PC-3 (cell line): ENCODE measurements at regions of chr2 and their contacts with region 1.

Region 1: DNA sequence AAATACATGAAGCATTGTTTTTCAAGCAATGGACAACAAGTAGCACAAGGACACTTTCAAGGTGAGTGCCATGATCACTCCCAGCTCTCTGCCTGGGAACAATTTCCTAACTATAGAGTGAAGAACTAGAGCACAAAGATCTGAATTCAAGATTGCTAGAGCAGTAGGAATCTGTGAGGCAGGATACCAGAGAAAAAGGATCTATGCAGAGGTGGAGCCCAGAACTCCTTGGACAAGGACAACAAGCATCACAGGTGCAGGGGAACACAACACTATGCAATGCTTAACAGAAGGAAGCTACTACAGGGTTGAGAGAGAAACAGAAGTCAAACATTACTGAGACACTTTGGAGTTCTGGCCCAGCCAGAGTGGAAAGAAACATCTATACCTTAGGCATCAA is 24.7 kb downstream of the ATL2 start:
- DNase-seq: no peak
- ATAC-seq: no peak
- H3K4me3 ChIP-seq: no peak overlapping the region
- H3K27ac ChIP-seq: no peak overlapping the region
- H3K4me1 ChIP-seq: no peaks in the 10 kb centered on the region
- H3K27me3 ChIP-seq: no peaks in the 10 kb centered on the region
- CTCF ChIP-seq: no peak

Region 2: DNA sequence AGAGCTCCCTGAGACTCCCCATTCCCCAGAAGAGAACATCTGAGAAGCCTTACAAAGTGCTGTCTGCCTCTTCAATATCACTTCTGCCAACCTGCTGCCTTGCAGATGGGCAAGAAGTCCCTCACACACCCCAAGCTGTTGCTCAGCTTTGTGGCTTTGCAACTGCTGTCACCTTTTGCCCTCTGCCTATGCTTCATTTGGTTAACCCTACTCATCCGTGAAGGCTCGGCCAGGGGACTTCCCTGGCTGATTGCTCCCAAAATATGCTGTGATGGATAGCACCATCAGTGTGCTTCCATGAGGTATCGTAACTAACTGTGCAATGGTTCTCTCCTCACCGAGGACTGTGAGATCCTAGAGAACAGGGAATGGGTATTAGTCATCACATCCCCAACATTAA is 187.5 kb before region 1 on chr2:
- CTCF ChIA-PET with region 1: no interaction called
- POLR2A ChIA-PET with region 1: no interaction called
- intact Hi-C with region 1: no loop called
- DNase-seq: no peak
- ATAC-seq: no peak
- H3K4me3 ChIP-seq: no peak overlapping the region
- H3K27ac ChIP-seq: no peak overlapping the region
- H3K4me1 ChIP-seq: no peaks in the 10 kb centered on the region
- H3K27me3 ChIP-seq: no peaks in the 10 kb centered on the region
- CTCF ChIP-seq: no peak

Region 3: DNA sequence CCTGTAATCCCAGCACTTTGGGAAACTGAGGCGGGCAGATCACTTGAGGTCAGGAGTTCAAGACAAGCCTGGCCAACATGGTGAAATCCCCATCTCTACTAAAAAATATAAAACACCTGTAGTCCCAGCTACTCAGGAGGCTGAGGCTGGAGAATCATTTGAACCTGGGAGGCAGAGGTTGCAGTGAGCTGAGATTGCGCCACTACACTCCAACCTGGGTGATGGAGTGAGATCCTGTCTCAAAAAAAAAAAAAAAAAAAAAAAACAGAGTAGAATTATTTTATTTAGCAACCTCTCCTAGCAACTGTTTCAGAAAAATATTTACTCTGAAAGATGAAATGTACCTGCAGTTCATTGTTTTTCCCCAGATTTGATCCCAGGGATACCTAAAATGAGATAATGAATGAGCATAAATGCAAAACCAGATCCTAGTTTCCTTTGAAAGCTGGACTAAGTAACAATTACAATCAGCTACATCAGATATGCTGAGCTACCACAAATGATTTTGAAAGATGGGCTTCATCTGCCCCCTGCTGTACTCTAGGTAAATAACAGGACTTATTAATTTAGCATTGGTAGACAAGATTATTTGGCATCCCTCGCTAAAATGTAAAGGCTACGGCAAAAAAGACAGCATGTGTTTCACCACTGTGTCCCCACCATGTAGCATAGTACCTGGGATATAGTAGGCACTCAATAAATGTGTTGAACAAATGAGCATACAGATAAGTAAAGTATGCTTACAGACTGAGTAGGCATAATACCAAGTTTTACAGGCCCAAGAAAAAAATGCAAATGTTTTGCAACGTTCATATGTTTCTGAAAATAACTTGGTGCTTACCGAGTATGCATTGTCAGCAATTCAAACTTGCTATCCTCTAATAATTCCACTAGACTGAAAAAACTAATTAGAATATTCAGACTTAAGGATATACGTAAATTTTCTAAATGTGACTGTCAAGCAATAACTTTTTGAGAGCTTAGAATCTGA is 77.8 kb before region 1 on chr2:
- CTCF ChIA-PET with region 1: no interaction called
- POLR2A ChIA-PET with region 1: no interaction called
- intact Hi-C with region 1: no loop called
- DNase-seq: peak; percentile 83
- ATAC-seq: peak; percentile 67
- H3K4me3 ChIP-seq: no peak overlapping the region
- H3K27ac ChIP-seq: no peak overlapping the region
- H3K4me1 ChIP-seq: no peaks in the 10 kb centered on the region
- H3K27me3 ChIP-seq: no peaks in the 10 kb centered on the region
- CTCF ChIP-seq: peak; percentile 80

Region 4: DNA sequence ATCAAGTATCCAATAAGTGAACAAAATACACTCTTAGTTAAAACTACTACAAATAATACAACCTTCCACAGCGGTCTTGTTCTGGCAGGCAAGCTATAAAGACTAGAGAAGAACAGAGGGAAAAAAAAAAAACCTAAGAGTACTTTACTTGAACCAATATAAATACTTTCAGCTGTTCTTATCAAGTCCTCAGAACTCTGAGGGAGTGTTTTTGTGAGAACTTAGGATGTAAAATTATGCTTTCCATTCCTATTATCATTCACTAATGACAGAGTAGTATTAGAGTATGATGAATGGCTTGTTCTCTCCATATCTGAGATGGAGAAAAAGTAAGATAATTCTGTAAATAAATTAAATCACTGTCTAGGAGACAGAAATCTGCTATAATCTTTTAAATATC is 43.5 kb before region 1 on chr2:
- CTCF ChIA-PET with region 1: no interaction called
- POLR2A ChIA-PET with region 1: no interaction called
- intact Hi-C with region 1: no loop called
- DNase-seq: no peak
- ATAC-seq: no peak
- H3K4me3 ChIP-seq: no peak overlapping the region
- H3K27ac ChIP-seq: no peak overlapping the region
- H3K4me1 ChIP-seq: no peaks in the 10 kb centered on the region
- H3K27me3 ChIP-seq: no peaks in the 10 kb centered on the region
- CTCF ChIP-seq: no peak

Region 5: DNA sequence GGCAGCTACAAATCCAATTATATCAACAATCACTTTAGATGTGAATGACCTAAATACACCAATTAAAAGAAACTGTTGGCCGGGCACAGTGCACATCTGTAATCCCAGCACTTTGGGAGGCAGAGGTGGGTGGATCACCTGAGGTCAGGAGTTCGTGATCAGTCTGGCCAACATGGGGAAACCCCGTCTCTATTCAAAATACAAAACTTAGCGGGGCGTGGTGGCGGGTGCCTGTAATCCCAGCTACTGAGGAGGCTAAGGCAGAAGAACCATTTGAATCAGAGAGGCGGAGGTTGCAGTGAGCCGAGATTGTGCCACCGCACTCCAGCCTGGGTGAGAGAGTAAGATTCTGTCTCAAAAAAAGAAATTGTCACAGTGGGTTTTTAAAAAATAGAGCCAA is 24.8 kb before region 1 on chr2:
- CTCF ChIA-PET with region 1: no interaction called
- POLR2A ChIA-PET with region 1: interaction called, 11 read pairs
- intact Hi-C with region 1: no loop called
- DNase-seq: no peak
- ATAC-seq: no peak
- H3K4me3 ChIP-seq: no peak overlapping the region
- H3K27ac ChIP-seq: no peak overlapping the region
- H3K4me1 ChIP-seq: no peaks in the 10 kb centered on the region
- H3K27me3 ChIP-seq: no peaks in the 10 kb centered on the region
- CTCF ChIP-seq: no peak